ENCODE measurements at regions of chr3 and their contacts with region 1.

Region 1: GRCh38 chr3:10173926-10174435 is 9.3 kb downstream of the IRAK2 start:
- DNase-seq: peak; percentile 24
- ATAC-seq: peak; percentile 49
- H3K4me3 Mint-ChIP-seq: no peak overlapping the region
- H3K27ac Mint-ChIP-seq: no peak overlapping the region
- H3K4me1 Mint-ChIP-seq: peaks cover 22% of the 10 kb centered on the region
- H3K27me3 Mint-ChIP-seq: no peaks in the 10 kb centered on the region

Region 2: GRCh38 chr3:10041034-10041433 is 132.9 kb before region 1 on chr3:
- CTCF ChIA-PET with region 1: no interaction called
- POLR2A ChIA-PET with region 1: no interaction called
- intact Hi-C with region 1: no loop called
- DNase-seq: no peak
- ATAC-seq: no peak
- H3K4me3 Mint-ChIP-seq: no peak overlapping the region
- H3K27ac Mint-ChIP-seq: no peak overlapping the region
- H3K4me1 Mint-ChIP-seq: no peaks in the 10 kb centered on the region
- H3K27me3 Mint-ChIP-seq: no peaks in the 10 kb centered on the region

Region 3: GRCh38 chr3:10185804-10186762 is 12.1 kb after region 1 on chr3:
- CTCF ChIA-PET with region 1: interaction called, 4 read pairs
- POLR2A ChIA-PET with region 1: interaction called, 3 read pairs
- intact Hi-C with region 1: loop called in 1 of 2 experiments (anchors 2 kb)
- DNase-seq: no peak
- ATAC-seq: no peak
- H3K4me3 Mint-ChIP-seq: no peak overlapping the region
- H3K27ac Mint-ChIP-seq: peak overlapping the region; percentile 83
- H3K4me1 Mint-ChIP-seq: peaks cover 50% of the 10 kb centered on the region
- H3K27me3 Mint-ChIP-seq: no peaks in the 10 kb centered on the region

Region 4: GRCh38 chr3:10248184-10249080 is 74.5 kb after region 1 on chr3 and contains the start of gene TATDN2:
- CTCF ChIA-PET with region 1: no interaction called
- POLR2A ChIA-PET with region 1: no interaction called
- intact Hi-C with region 1: no loop called
- DNase-seq: peak; percentile 97
- ATAC-seq: peak; percentile 94
- H3K4me3 Mint-ChIP-seq: peak within 1 kb of the TSS; percentile 97
- H3K27ac Mint-ChIP-seq: peak within 1 kb of the TSS; percentile 96
- H3K4me1 Mint-ChIP-seq: peaks cover 63% of the 10 kb centered on the region
- H3K27me3 Mint-ChIP-seq: no peaks in the 10 kb centered on the region
- total RNA-seq, gene TATDN2: 40.0 to 40.2 TPM